Psoas muscle (tissue), 8 donors: ENCODE measurements at regions of chr9 and their contacts with region 1.

Region 1: DNA sequence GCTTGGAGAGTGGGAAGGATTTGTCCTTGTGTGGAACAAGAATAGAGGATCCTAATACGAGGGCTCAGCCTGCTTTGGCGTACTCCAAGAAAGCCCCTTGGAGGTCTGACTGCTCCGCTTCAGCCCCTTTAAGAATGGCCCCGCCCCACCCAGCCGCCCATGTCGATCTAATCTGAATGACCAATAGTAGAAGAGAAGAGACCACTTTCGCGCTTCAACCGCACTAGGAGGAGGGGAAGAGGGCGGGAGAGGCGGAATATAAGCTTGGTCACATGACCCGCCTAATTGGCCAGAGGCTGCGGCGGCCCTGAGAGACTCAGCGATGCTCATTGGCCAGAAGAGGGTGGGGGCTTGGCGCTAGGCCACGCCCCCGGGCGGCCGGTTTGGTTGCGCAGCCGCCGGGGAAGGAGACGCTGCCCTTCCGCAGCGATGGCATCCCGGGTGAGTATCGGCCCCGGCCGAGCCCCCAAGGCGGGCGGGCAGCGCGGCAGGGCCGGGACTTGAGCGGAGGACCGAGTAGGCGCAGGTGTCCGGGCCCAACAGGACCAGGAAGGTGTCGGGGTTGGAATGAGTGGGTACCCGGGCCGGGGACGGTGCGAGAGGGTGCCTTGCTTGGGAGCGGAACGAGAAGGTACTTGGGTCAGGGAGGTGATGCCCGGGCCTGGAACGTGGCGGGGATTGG is at the start of gene MIGA2:
- DNase-seq: peak; percentile 97 to 98
- ATAC-seq: peak; percentile 98 to 99 (median 98)
- H3K4me3 ChIP-seq: peak within 1 kb of the TSS; percentile 94
- H3K27ac ChIP-seq: peak within 1 kb of the TSS; percentile 89
- H3K4me1 ChIP-seq: peaks cover 16% of the 10 kb centered on the region
- H3K27me3 ChIP-seq: no peaks in the 10 kb centered on the region
- CTCF ChIP-seq: no peak
- total RNA-seq, gene MIGA2: 8.4 to 17.8 (median 14.8) TPM

Region 2: GRCh38 chr9:127770905-127771569 is 1265.3 kb before region 1 on chr9:
- intact Hi-C with region 1: no loop called
- DNase-seq: peak; percentile 98 to 99
- ATAC-seq: peak; percentile 97 to 98 (median 98)
- H3K4me3 ChIP-seq: peak overlapping the region; percentile 73
- H3K27ac ChIP-seq: peak overlapping the region; percentile 55
- H3K4me1 ChIP-seq: peaks cover 6% of the 10 kb centered on the region
- H3K27me3 ChIP-seq: no peaks in the 10 kb centered on the region
- CTCF ChIP-seq: no peak

Region 3: GRCh38 chr9:129071526-129072131 is 35.2 kb after region 1 on chr9:
- intact Hi-C with region 1: loop called in 1 of 2 experiments (anchors 5 kb)
- DNase-seq: no peak
- ATAC-seq: peak in 1 of 4 donors; percentile 2
- H3K4me3 ChIP-seq: no peak overlapping the region
- H3K27ac ChIP-seq: no peak overlapping the region
- H3K4me1 ChIP-seq: no peaks in the 10 kb centered on the region
- H3K27me3 ChIP-seq: no peaks in the 10 kb centered on the region
- CTCF ChIP-seq: no peak

Region 4: GRCh38 chr9:129080602-129081387 is 44.4 kb after region 1 on chr9 and contains the start of gene DOLPP1:
- intact Hi-C with region 1: loop called in 1 of 2 experiments (anchors 5 kb)
- DNase-seq: peak; percentile 99 to 100
- ATAC-seq: peak; percentile 97 to 99 (median 98)
- H3K4me3 ChIP-seq: peak within 1 kb of the TSS; percentile 75
- H3K27ac ChIP-seq: peak within 1 kb of the TSS; percentile 87
- H3K4me1 ChIP-seq: peaks cover 17% of the 10 kb centered on the region
- H3K27me3 ChIP-seq: no peaks in the 10 kb centered on the region
- CTCF ChIP-seq: no peak
- total RNA-seq, gene DOLPP1: 2.1 to 4.7 (median 4.2) TPM